ENCODE measurements at regions of chr16 and their contacts with region 1.

Region 1: DNA sequence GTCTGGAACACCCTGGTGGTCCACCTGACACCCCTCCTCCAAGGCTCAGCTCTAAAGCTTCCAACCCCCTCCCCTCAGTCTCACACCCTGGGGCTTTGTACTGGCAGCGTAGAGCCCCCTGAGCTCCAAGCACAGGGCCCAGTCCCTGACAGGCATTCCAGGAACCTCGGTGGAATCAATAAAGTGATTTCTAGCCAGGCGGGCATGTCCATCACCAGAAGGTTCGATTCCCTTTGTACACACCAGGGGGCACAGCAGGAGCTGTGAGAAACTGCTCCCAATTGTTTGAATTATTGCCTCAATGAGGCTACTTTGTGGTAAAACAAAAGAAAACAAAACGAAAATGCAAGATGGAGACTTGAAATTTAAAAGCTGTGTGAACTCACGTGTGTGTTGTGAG is 51.8 kb downstream of the SMPD3 start:
- DNase-seq: peak; percentile 65
- ATAC-seq: peak; percentile 70
- H3K4me3 Mint-ChIP-seq: no peak overlapping the region
- H3K27ac Mint-ChIP-seq: peak overlapping the region; percentile 56
- H3K4me1 Mint-ChIP-seq: peaks cover 25% of the 10 kb centered on the region
- H3K27me3 Mint-ChIP-seq: peaks cover 22% of the 10 kb centered on the region

Region 2: GRCh38 chr16:68275611-68276191 is 120.8 kb before region 1 on chr16:
- CTCF ChIA-PET with region 1: no interaction called
- DNase-seq: peak; percentile 65
- ATAC-seq: peak; percentile 75
- H3K4me3 Mint-ChIP-seq: peak overlapping the region; percentile 37
- H3K27ac Mint-ChIP-seq: peak overlapping the region; percentile 90
- H3K4me1 Mint-ChIP-seq: peaks cover 60% of the 10 kb centered on the region
- H3K27me3 Mint-ChIP-seq: no peaks in the 10 kb centered on the region

Region 3: GRCh38 chr16:68346892-68347480 is 49.5 kb before region 1 on chr16:
- CTCF ChIA-PET with region 1: no interaction called
- DNase-seq: no peak
- ATAC-seq: no peak
- H3K4me3 Mint-ChIP-seq: peak overlapping the region; percentile 45
- H3K27ac Mint-ChIP-seq: peak overlapping the region; percentile 66
- H3K4me1 Mint-ChIP-seq: peaks cover 33% of the 10 kb centered on the region
- H3K27me3 Mint-ChIP-seq: no peaks in the 10 kb centered on the region

Region 4: GRCh38 chr16:68406451-68407152 is 10.1 kb after region 1 on chr16:
- CTCF ChIA-PET with region 1: interaction called, 16 read pairs
- DNase-seq: no peak
- ATAC-seq: no peak
- H3K4me3 Mint-ChIP-seq: no peak overlapping the region
- H3K27ac Mint-ChIP-seq: no peak overlapping the region
- H3K4me1 Mint-ChIP-seq: peaks cover 17% of the 10 kb centered on the region
- H3K27me3 Mint-ChIP-seq: peaks cover 30% of the 10 kb centered on the region

Region 5: DNA sequence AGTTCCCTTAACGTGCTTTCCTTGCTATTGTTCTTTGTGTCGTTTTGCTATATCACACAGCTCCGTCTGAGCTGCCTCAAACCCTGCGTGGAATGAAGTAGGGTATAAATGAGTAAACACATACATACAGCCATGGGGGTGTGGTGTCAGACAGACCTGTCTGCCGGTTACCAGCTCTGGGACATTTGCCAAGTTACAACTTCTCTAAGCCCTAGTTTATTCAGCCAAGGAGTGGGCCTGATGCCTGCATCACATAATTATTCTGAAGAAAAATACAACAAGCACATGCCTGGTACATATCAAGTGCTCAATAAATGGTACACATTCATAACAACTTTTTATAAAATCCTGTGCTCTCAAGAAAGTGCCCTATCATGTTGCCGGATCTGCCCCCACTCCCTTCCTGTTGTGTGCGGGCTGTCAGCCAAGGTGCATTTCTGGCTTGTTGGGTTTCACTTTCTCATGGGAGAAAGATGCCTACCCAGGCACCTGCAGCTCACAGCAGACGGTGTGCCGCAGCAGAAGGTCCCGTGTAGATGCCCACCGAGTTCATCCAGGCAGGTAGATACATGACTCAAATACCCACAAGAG is 21.3 kb after region 1 on chr16:
- CTCF ChIA-PET with region 1: interaction called, 45 read pairs
- DNase-seq: peak; percentile 89
- ATAC-seq: peak; percentile 91
- H3K4me3 Mint-ChIP-seq: peak overlapping the region; percentile 62
- H3K27ac Mint-ChIP-seq: peak overlapping the region; percentile 88
- H3K4me1 Mint-ChIP-seq: peaks cover 24% of the 10 kb centered on the region
- H3K27me3 Mint-ChIP-seq: no peaks in the 10 kb centered on the region

Region 6: DNA sequence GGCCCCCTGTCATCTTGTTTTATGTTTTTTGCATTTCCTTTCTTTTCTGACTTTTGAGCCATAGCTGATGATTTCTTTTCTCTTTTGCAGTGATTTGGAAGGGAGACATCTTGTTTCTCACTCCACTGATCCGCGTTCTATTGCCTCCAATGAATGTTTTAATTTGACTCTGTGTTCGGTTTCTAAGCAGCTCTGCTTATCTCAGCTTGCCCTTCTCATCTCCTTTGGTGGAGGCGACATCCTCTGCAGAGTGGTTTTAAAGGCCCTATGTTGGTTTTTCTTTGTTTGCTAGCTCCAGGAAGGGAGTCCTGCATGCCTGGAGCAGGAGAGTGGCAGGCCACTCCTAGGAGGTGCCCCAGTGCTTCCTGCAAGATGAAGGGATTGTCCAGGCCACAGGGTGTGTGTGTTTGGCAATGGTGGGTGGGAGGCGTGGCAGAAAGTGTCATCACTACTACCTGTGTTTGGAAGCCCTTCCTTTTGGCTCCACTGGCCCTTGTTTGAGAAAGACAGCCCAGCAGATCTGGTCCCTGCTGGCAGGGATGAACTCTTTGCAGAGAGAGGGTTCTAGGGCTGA is 38.2 kb after region 1 on chr16:
- CTCF ChIA-PET with region 1: interaction called, 10 read pairs
- DNase-seq: no peak
- ATAC-seq: no peak
- H3K4me3 Mint-ChIP-seq: no peak overlapping the region
- H3K27ac Mint-ChIP-seq: no peak overlapping the region
- H3K4me1 Mint-ChIP-seq: peaks cover 6% of the 10 kb centered on the region
- H3K27me3 Mint-ChIP-seq: peaks cover 16% of the 10 kb centered on the region

Region 7: GRCh38 chr16:68520649-68521086 is 124.2 kb after region 1 on chr16:
- CTCF ChIA-PET with region 1: interaction called, 12 read pairs
- DNase-seq: peak; percentile 92
- ATAC-seq: peak; percentile 94
- H3K4me3 Mint-ChIP-seq: peak overlapping the region; percentile 32
- H3K27ac Mint-ChIP-seq: no peak overlapping the region
- H3K4me1 Mint-ChIP-seq: peaks cover 9% of the 10 kb centered on the region
- H3K27me3 Mint-ChIP-seq: peaks cover 2% of the 10 kb centered on the region